Naive thymus-derived CD4-positive, alpha-beta T cell (primary cell): ENCODE measurements at regions of chr2 and their contacts with region 1.

Region 1: DNA sequence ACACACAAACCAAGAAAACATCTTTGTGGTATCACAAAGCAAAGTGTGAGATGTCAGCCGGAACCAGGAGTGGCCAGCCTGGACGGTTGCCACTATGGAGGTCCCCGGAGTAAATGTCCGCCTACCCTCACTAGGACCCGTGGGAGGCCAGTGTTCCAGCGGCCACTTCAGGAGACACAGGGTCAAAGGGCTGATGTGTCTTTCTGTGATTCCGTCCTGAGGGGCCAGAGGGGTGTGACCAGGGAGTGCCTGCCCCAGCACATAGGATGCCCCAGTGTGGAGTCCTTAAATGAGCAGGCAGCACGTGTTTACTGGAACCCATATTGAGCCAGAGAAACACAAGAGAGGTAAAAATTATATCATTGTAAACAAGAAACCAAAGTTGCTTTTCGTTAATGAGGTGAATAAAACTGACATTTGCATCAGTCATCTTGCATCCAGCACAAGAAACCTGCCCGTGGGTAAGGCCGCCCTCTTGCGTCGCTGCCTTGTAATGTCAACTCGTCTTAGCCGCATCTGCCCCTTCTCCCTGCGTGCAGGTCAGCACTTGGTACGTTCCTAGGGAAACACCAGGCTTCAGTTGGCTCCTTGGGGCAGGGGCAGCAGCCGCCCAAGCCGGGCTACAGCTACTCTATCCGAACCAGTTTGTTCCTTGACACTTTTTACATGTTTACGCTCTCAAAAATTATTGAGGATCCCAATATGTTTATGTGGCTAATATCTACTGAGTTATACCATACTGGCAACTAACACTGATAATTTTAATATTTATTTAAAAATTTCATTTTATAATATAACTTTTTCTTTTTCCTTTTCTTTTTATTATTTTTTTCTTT is 46.7 kb upstream of the LAPTM4A start:
- DNase-seq: peak; percentile 58 to 73 (median 67)
- ATAC-seq: peak; percentile 94
- H3K4me3 ChIP-seq: no peak overlapping the region
- H3K4me3 Mint-ChIP-seq: no peak overlapping the region
- H3K27ac ChIP-seq: no peak overlapping the region
- H3K27ac Mint-ChIP-seq: no peak overlapping the region
- H3K4me1 ChIP-seq: no peaks in the 10 kb centered on the region
- H3K4me1 Mint-ChIP-seq: peaks cover 0 to 4% (median 0%) of the 10 kb centered on the region in 7 donors
- H3K27me3 ChIP-seq: no peaks in the 10 kb centered on the region
- H3K27me3 Mint-ChIP-seq: peaks cover 12 to 21% (median 13%) of the 10 kb centered on the region in 5 donors

Region 2: DNA sequence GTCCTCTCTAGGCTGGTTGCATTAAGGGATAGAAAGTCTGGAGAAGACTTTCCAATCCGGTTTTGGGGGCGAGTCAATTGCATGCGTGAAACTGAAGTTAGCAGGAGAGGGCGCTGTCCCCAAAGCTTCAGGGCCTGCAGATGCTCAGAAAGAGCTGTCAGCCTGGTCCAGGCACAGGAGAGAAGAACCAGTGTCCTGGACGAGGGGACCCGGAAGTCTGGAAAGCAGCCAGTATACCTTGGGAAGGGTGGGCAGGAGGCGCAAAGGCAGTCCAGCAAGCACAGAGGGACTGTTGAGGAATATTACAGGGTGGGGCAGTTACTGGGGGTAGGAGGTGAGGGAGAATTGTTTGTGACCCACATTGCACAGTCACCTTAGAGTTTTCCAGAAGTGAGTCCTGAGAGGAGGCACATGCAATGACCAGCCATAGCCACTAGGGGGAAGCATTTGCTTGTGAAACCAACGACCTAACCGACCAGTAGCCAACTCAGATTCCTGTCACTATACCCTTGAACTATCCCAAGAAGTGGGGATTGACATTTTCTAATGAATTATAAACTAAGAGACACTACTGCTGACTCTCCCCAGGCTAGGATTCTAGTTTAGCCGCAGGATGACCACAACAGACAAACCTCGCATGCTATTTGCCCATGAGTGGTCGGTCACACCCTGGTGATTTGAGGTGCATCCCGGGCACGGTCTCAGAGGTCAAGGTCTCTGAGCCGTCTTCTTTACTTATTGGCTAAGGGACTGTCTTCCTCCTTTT is 1710.5 kb before region 1 on chr2:
- CTCF ChIA-PET with region 1: no interaction called
- POLR2A ChIA-PET with region 1: no interaction called
- intact Hi-C with region 1: loop called in 1 of 2 experiments (anchors 1 kb)
- DNase-seq: peak; percentile 17 to 53 (median 40)
- ATAC-seq: peak; percentile 61
- H3K4me3 ChIP-seq: no peak overlapping the region
- H3K4me3 Mint-ChIP-seq: no peak overlapping the region
- H3K27ac ChIP-seq: no peak overlapping the region
- H3K27ac Mint-ChIP-seq: no peak overlapping the region
- H3K4me1 ChIP-seq: no peaks in the 10 kb centered on the region
- H3K4me1 Mint-ChIP-seq: no peaks in the 10 kb centered on the region
- H3K27me3 ChIP-seq: peaks cover 0 to 3% of the 10 kb centered on the region in 2 donors
- H3K27me3 Mint-ChIP-seq: peaks cover 0 to 7% (median 0%) of the 10 kb centered on the region in 5 donors

Region 3: GRCh38 chr2:19868705-19869580 is 229.2 kb before region 1 on chr2:
- CTCF ChIA-PET with region 1: no interaction called
- POLR2A ChIA-PET with region 1: no interaction called
- intact Hi-C with region 1: loop called in 1 of 2 experiments (anchors 5 kb)
- DNase-seq: peak; percentile 41 to 79 (median 74)
- ATAC-seq: peak; percentile 91
- H3K4me3 ChIP-seq: peak overlapping the region; percentile 74
- H3K4me3 Mint-ChIP-seq: peak overlapping the region; percentile 94 to 98 (median 97)
- H3K27ac ChIP-seq: peak overlapping the region; percentile 76
- H3K27ac Mint-ChIP-seq: peak overlapping the region; percentile 95 to 98 (median 96)
- H3K4me1 ChIP-seq: peaks cover 12 to 19% of the 10 kb centered on the region in 2 donors
- H3K4me1 Mint-ChIP-seq: peaks cover 25 to 48% (median 34%) of the 10 kb centered on the region in 7 donors
- H3K27me3 ChIP-seq: no peaks in the 10 kb centered on the region
- H3K27me3 Mint-ChIP-seq: peaks cover 0 to 7% (median 0%) of the 10 kb centered on the region in 5 donors

Region 4: GRCh38 chr2:20015472-20016083 is 82.5 kb before region 1 on chr2:
- CTCF ChIA-PET with region 1: interaction called, 11 read pairs
- POLR2A ChIA-PET with region 1: no interaction called
- intact Hi-C with region 1: loop called (anchors 1 kb)
- DNase-seq: peak in 5 of 9 donors; percentile 33 to 55 (median 43)
- ATAC-seq: peak; percentile 82
- H3K4me3 ChIP-seq: no peak overlapping the region
- H3K4me3 Mint-ChIP-seq: no peak overlapping the region
- H3K27ac ChIP-seq: no peak overlapping the region
- H3K27ac Mint-ChIP-seq: no peak overlapping the region
- H3K4me1 ChIP-seq: peaks cover 0 to 3% of the 10 kb centered on the region in 2 donors
- H3K4me1 Mint-ChIP-seq: peaks cover 5 to 16% (median 14%) of the 10 kb centered on the region in 7 donors
- H3K27me3 ChIP-seq: no peaks in the 10 kb centered on the region
- H3K27me3 Mint-ChIP-seq: peaks cover 33 to 48% (median 36%) of the 10 kb centered on the region in 5 donors

Region 5: DNA sequence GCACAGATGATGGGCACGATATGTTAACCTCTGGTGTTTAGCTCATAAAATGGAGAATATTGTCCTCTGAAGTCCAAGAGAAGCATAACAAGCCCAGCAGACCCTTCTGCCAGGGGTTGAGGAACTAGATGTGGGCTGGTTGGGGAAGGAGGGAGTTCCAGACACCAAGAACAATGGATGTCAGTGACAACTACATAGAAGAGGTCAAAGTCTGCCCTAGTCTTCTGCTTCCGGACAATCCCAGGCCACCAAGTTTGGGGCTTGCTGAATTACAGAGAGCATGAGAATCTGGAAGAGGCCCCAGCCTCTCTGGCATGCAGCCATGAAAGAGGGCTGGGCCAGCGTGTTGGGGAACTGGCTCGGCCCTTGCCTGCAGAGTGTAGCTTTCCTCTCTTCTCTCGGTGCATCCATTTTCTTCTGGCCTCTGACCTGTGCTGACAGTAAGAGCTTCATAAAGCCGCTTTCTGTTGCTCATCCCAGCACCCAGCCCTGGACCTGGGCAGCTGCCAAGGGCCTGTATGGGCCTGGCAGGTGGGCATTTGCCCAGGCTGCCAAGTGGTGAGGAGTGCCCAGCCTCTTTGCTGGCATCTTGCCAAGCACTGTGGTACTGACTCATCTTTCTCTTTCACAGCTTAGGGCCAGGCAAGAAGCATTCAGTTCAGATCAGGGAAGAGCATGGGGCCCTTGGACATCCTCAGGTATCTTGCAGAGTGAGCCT is 32.1 kb before region 1 on chr2:
- CTCF ChIA-PET with region 1: no interaction called
- POLR2A ChIA-PET with region 1: no interaction called
- intact Hi-C with region 1: no loop called
- DNase-seq: no peak
- ATAC-seq: peak; percentile 29
- H3K4me3 ChIP-seq: no peak overlapping the region
- H3K4me3 Mint-ChIP-seq: no peak overlapping the region
- H3K27ac ChIP-seq: no peak overlapping the region
- H3K27ac Mint-ChIP-seq: no peak overlapping the region
- H3K4me1 ChIP-seq: no peaks in the 10 kb centered on the region
- H3K4me1 Mint-ChIP-seq: no peaks in the 10 kb centered on the region
- H3K27me3 ChIP-seq: no peaks in the 10 kb centered on the region
- H3K27me3 Mint-ChIP-seq: peaks cover 0 to 22% (median 4%) of the 10 kb centered on the region in 5 donors

Region 6: DNA sequence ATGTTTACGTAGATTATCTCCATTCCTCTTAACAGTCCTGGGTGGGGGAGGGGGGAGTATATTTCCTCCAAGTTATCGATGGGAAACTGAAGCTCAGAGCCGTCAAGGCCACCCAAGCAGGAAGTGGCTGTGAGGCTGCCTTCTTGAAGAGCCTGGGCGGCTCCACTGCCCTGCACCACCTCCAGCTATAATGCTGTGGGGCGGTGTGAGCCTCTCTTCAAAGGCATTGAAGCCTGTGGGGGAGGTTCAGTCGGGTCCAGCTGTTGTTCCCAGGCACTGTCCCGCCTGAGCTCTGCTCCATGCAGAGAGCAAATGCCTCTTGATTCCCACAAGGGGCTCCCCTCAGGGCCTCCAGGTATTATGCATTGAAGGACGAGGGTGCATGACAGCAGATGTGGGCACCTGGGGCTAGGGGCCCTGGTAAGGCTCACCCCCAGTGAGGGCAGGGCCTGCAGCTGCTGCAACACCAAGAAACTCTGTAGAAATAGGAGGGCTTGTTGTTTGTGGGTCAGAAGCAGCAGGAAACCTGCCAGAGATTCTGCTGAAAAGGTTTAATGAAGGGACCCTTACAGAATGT is 17.2 kb before region 1 on chr2:
- CTCF ChIA-PET with region 1: no interaction called
- POLR2A ChIA-PET with region 1: no interaction called
- intact Hi-C with region 1: no loop called
- DNase-seq: no peak
- ATAC-seq: no peak
- H3K4me3 ChIP-seq: no peak overlapping the region
- H3K4me3 Mint-ChIP-seq: no peak overlapping the region
- H3K27ac ChIP-seq: no peak overlapping the region
- H3K27ac Mint-ChIP-seq: no peak overlapping the region
- H3K4me1 ChIP-seq: no peaks in the 10 kb centered on the region
- H3K4me1 Mint-ChIP-seq: no peaks in the 10 kb centered on the region
- H3K27me3 ChIP-seq: no peaks in the 10 kb centered on the region
- H3K27me3 Mint-ChIP-seq: peaks cover 0 to 5% (median 0%) of the 10 kb centered on the region in 5 donors